Sciatic nerve (tissue), 2 donors: ENCODE measurements at regions of chr9 and their contacts with region 1.

Region 1: GRCh38 chr9:90914868-90915483 is 113.4 kb downstream of the SYK start:
- DNase-seq: peak; percentile 83
- ATAC-seq: peak; percentile 93

Region 2: GRCh38 chr9:89448381-89448780 is 1466.6 kb before region 1 on chr9:
- intact Hi-C with region 1: no loop called
- DNase-seq: no peak
- ATAC-seq: peak; percentile 75

Region 3: GRCh38 chr9:91433180-91433579 is 518.2 kb after region 1 on chr9:
- intact Hi-C with region 1: loop called (anchors 10 kb)
- DNase-seq: no peak
- ATAC-seq: peak; percentile 78

Region 4: GRCh38 chr9:91727316-91727861 is 812.4 kb after region 1 on chr9:
- intact Hi-C with region 1: loop called (anchors 10 kb)
- DNase-seq: no peak
- ATAC-seq: peak; percentile 67